ENCODE measurements at regions of chr1 and their contacts with region 1.

Region 1: GRCh38 chr1:15323351-15323988 is 76.4 kb downstream of the FHAD1 start:
- DNase-seq: peak; percentile 80
- ATAC-seq: peak; percentile 85
- H3K4me3 Mint-ChIP-seq: no peak overlapping the region
- H3K27ac Mint-ChIP-seq: no peak overlapping the region
- H3K4me1 Mint-ChIP-seq: peaks cover 28% of the 10 kb centered on the region
- H3K27me3 Mint-ChIP-seq: no peaks in the 10 kb centered on the region
- CTCF ChIP-seq: peak; percentile 97

Region 2: DNA sequence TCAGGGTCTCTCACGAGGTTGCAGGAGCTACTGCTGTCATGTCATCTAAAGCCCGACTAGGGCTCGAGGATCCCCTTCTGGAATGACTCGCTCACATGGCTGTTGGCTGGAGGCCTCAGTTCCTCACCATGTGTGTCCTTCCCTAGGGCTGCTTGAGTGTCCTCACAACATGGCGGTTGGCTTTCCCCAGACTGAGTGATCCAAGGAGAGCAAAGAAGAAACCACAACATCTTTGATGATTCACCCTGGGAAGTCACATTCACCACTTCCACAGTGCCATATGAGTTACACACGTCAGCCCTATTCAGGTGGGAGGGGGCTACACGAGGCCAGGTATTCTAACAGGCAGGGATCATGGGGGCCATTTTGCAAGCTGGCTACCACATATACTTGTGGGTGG is 11.6 kb before region 1 on chr1:
- CTCF ChIA-PET with region 1: interaction called, 13 read pairs
- POLR2A ChIA-PET with region 1: no interaction called
- DNase-seq: no peak
- ATAC-seq: no peak
- H3K4me3 Mint-ChIP-seq: no peak overlapping the region
- H3K27ac Mint-ChIP-seq: no peak overlapping the region
- H3K4me1 Mint-ChIP-seq: peaks cover 9% of the 10 kb centered on the region
- H3K27me3 Mint-ChIP-seq: no peaks in the 10 kb centered on the region; the same call in none of the 2 replicates
- CTCF ChIP-seq: no peak

Region 3: GRCh38 chr1:15364740-15365139 is 41.3 kb after region 1 on chr1:
- CTCF ChIA-PET with region 1: interaction called, 12 read pairs
- POLR2A ChIA-PET with region 1: no interaction called
- DNase-seq: no peak
- ATAC-seq: peak; percentile 64
- H3K4me3 Mint-ChIP-seq: no peak overlapping the region
- H3K27ac Mint-ChIP-seq: no peak overlapping the region
- H3K4me1 Mint-ChIP-seq: peaks cover 6% of the 10 kb centered on the region
- H3K27me3 Mint-ChIP-seq: peaks cover 3% of the 10 kb centered on the region; the same call in 1 of the 2 replicates
- CTCF ChIP-seq: no peak

Region 4: GRCh38 chr1:15384301-15384901 is 60.9 kb after region 1 on chr1:
- CTCF ChIA-PET with region 1: interaction called, 26 read pairs
- POLR2A ChIA-PET with region 1: no interaction called
- DNase-seq: peak; percentile 82
- ATAC-seq: peak; percentile 80
- H3K4me3 Mint-ChIP-seq: peak overlapping the region; percentile 65
- H3K27ac Mint-ChIP-seq: peak overlapping the region; percentile 84
- H3K4me1 Mint-ChIP-seq: peaks cover 67% of the 10 kb centered on the region
- H3K27me3 Mint-ChIP-seq: peaks cover 95% of the 10 kb centered on the region
- CTCF ChIP-seq: no peak

Region 5: DNA sequence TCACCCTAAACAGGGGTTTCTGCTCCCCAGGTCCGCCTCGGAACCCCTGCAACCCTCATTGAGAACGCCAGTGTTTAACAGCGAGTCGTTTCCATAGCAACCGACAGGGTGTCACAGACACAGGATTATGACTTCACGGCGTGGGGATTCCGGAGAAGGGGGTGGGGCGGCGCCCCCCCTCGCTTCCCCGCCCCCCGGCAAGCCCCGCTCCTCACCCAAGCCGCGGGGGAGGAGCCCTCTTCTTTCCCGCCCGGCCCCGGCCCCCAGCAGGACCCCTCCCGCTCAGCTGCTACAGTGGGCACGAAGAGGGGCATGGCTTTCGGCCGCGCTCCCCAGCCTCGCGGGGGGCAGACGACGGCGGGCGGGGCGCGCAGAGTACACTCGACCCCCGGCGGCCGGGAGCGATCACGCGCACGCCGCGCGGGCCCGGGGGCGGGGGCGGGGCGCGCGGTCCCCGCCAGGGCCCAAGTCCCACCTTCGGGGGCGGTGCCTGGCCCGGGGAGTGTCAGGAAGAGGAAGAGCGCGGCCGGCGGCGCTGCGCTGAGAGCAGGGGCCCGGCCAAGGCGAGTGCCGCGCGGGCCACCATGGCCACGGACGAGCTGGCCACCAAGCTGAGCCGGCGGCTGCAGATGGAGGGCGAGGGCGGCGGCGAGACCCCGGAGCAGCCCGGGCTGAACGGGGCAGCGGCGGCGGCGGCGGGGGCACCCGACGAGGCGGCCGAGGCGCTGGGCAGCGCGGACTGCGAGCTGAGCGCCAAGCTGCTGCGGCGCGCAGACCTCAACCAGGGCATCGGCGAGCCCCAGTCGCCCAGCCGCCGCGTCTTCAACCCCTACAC is 86.1 kb after region 1 on chr1 and contains the start of gene EFHD2:
- CTCF ChIA-PET with region 1: interaction called, 21 read pairs
- POLR2A ChIA-PET with region 1: no interaction called
- DNase-seq: peak; percentile 77
- ATAC-seq: peak; percentile 88
- H3K4me3 Mint-ChIP-seq: peak within 1 kb of the TSS; percentile 80
- H3K27ac Mint-ChIP-seq: no peak within 1 kb of the TSS
- H3K4me1 Mint-ChIP-seq: peaks cover 24% of the 10 kb centered on the region
- H3K27me3 Mint-ChIP-seq: peaks cover 47% of the 10 kb centered on the region
- CTCF ChIP-seq: no peak
- total RNA-seq, gene EFHD2: 19.5 to 23.8 TPM (median 21.9 TPM) in 3 replicates

Region 6: GRCh38 chr1:15430787-15431570 is 107.5 kb after region 1 on chr1:
- CTCF ChIA-PET with region 1: interaction called, 118 read pairs
- POLR2A ChIA-PET with region 1: no interaction called
- DNase-seq: peak; percentile 93
- ATAC-seq: peak; percentile 93
- H3K4me3 Mint-ChIP-seq: no peak overlapping the region
- H3K27ac Mint-ChIP-seq: no peak overlapping the region
- H3K4me1 Mint-ChIP-seq: peaks cover 4% of the 10 kb centered on the region; the same call in 1 of the 2 replicates
- H3K27me3 Mint-ChIP-seq: no peaks in the 10 kb centered on the region
- CTCF ChIP-seq: peak; percentile 96